ENCODE measurements at regions of chr6 and their contacts with region 1.

Region 1: GRCh38 chr6:37018198-37019064 is 13.0 kb downstream of the FGD2 start:
- DNase-seq: peak; percentile 92
- ATAC-seq: peak; percentile 97

Region 2: DNA sequence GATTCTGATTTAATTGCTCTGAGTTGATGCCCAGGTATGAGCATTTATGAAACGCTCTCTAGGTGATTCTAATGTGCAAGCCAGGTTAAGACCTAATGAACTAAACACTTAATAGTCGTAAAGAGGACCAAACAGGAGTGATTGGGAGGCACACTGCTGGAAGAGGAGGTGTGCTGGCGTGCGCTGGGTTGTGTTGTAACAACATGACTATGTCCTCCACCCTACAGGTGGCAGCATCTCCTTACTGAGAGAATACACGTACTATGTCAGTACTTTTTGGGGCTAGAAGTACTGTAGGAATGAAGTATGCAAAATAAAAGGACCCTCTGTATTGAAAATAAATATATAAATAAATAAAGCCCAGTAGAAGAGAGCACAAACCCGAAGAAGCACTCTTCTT is 120.8 kb before region 1 on chr6:
- intact Hi-C with region 1: no loop called
- DNase-seq: no peak
- ATAC-seq: peak; percentile 46

Region 3: DNA sequence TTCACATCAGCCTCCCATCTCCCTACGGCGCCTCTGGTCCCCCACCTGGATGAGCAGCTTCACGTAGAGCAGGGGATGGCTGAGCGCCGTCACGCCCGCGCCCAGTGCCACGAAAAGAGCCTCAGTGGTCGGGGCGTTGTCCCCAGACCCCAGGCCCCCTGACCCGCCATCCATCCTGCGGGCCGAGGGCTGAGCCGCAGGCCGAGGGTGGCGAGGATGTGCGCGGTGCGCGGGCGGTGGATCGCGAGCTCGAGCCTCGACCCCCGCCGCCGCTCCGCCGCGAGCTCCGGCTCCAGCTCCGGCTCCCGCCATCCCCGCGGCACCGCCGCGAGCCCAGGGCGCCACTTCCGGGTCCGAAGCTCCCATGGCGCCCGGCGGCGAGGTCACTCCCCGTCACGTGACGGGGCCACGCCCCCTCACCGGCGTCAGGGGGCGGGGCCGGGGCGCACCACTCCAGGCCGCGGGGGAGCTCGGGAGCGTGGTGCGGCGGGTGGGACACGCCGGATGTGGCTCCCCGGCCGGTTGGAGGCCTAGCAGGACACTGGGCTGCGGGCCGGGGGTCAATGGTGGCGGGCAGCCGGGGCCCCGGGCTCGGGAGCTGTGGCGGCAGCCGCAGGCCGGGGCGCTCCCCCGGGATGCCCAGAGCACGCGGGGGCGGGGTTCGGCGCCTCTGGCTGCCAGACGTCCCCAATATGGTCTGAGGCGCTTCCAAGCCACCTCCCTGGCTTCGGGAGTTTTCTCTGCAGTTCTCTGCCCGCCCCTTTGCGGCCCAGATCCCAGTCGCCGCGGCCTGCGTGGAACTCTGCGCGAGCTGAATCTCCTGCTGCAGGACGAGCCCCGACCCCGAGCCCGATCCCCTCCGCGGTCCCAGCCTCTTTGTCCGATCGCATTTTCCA is 32.4 kb before region 1 on chr6 and contains the start of gene MTCH1:
- intact Hi-C with region 1: loop called (anchors 2 kb)
- DNase-seq: peak; percentile 94
- ATAC-seq: peak; percentile 96
- total RNA-seq, gene MTCH1: 220 TPM

Region 4: DNA sequence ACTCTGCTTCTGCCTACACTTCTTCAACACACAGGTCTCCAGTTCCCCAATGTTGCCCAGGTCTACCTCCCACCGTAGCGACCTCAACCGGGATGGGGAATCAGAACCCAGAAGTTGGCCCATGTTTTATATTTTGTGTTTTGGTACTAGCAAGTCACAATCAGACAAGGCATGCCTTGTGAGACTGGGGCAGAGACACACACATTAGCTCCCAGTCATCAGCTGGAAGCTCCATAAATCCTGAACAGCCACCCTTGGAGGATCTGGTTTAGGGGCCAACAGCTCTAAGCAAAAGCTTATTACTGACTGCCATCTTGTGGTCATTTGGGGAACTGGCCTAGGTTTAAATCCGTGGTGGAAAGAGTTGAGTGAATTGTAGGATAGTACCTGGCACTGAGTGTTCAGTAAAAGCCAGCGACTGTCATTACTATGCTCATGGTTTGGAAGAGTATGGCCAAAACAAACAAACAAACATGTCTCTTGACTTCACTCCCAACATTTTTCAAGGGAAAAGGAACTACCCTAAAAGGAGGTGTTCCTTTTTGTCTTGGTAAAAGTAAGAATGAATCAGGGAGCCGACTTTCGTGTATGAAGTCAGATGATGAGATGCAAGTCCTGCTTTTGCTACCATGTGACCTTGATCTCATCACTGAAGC is 192.0 kb after region 1 on chr6:
- intact Hi-C with region 1: loop called (anchors 1 kb)
- DNase-seq: no peak
- ATAC-seq: peak; percentile 83

Measured in Right ventricle myocardium inferior (tissue), 1 donor.